Posterior vena cava (tissue), 2 donors: ENCODE measurements at regions of chr13 and their contacts with region 1.

Region 1: DNA sequence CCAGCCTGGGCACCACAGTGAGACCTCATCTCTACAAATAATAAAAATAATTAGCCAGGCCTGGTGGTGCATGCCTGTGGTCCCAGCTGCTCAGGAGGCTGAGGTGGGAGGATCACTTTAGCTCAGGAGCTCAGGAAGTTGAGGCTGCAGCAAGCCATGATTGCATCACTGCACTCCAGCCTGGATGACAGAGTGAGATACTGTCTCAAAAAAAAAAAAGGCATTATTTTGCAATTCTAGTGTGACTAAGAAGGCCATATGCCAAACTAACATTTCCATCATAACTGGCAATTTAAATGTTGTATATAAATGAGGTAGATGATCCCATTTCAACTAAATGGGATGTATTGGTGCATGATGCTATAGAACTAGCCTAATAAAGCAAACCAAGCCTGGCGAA is 632.8 kb upstream of the KLF12 start:
- DNase-seq: no peak

Region 2: GRCh38 chr13:72920097-72920496 is 1847.0 kb before region 1 on chr13:
- intact Hi-C with region 1: loop called in 1 of 2 experiments (anchors 5 kb)
- DNase-seq: no peak